ENCODE measurements at regions of chr6 and their contacts with region 1.

Region 1: GRCh38 chr6:27132532-27133280 is 114.8 kb upstream of the PRSS16 start:
- DNase-seq: peak; percentile 82 to 97
- H3K4me3 ChIP-seq: peak overlapping the region; percentile 69 to 75
- H3K27ac ChIP-seq: peak overlapping the region; percentile 88 to 89
- H3K4me1 ChIP-seq: peaks cover 4 to 10% of the 10 kb centered on the region in 2 donors
- H3K27me3 ChIP-seq: no peaks in the 10 kb centered on the region
- CTCF ChIP-seq: no peak

Region 2: GRCh38 chr6:27146706-27147505 is 14.2 kb after region 1 on chr6:
- intact Hi-C with region 1: loop called (anchors 1 kb)
- DNase-seq: peak; percentile 40 to 91
- H3K4me3 ChIP-seq: peak overlapping the region; percentile 68 to 85
- H3K27ac ChIP-seq: peak overlapping the region; percentile 93
- H3K4me1 ChIP-seq: no peaks in the 10 kb centered on the region
- H3K27me3 ChIP-seq: no peaks in the 10 kb centered on the region
- CTCF ChIP-seq: no peak

Region 3: GRCh38 chr6:27902335-27903314 is 769.9 kb after region 1 on chr6:
- intact Hi-C with region 1: loop called (anchors 2 kb)
- DNase-seq: peak in 1 of 2 donors; percentile 93
- H3K4me3 ChIP-seq: peak overlapping the region; percentile 59 to 73
- H3K27ac ChIP-seq: peak overlapping the region; percentile 87 to 94
- H3K4me1 ChIP-seq: peaks cover 0 to 3% of the 10 kb centered on the region in 2 donors
- H3K27me3 ChIP-seq: no peaks in the 10 kb centered on the region
- CTCF ChIP-seq: no peak